Dendritic cell treated with granulocyte-macrophage colony-stimulating factor and Interleukin-4, amounts not matched to agents 40 ng/mL and 50 ng/mL, for 4 days (primary cell): ENCODE measurements at regions of chr20 and their contacts with region 1.

Region 1: DNA sequence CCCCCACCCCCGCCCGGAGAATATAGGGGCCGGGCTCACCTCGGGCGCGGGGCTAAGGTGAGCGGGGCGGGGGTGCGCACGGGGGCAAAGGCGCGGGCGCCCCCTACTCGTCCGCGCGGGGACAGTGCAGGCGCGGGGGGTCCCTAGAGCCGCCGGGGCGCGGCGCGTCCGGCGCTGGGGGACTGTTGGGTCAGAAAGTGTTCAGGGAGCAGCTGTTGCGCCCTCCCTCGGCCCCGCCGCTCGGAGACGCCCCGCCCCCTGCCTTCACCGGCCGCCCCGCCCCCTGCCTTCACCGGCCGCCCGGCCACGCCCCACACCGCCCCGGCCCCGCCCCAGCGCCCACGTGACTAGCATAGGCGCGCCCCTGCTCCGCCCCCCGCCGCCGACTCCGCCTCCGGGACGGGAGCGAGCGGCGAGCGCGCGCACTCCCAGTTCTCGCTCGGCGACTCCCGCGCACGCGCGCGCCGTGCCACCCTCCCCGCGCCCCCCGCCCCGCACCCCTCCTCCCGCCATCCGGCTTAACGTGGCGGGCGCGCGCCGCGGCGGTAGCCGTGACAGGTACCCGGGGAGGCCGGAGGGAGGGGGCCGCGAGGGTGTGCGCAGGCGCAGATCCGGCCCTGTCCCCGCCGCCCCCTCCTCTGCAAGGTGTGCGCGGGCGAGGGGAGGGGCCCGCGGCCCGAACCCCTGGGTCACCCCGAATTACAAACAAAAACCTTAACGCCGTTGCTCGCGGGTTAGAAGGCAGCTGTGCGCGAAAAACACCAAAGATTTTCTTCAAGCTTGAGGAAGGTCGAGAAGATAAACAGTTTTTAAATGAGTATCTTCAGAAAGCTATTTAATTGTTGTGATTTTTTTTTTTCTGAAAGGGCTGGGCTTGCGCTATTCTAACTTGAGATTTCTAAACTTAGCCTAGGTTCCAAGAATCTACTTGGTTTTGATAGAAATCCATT is 704 bp upstream of the ZNF217 start:
- H3K4me3 Mint-ChIP-seq: peak overlapping the region; percentile 88
- H3K27ac Mint-ChIP-seq: peak overlapping the region; percentile 95
- H3K4me1 Mint-ChIP-seq: peaks cover 39% of the 10 kb centered on the region
- H3K27me3 Mint-ChIP-seq: no peaks in the 10 kb centered on the region

Region 2: GRCh38 chr20:53643031-53643832 is 48.9 kb after region 1 on chr20:
- intact Hi-C with region 1: loop called (anchors 5 kb)
- H3K4me3 Mint-ChIP-seq: peak overlapping the region; percentile 62
- H3K27ac Mint-ChIP-seq: peak overlapping the region; percentile 91
- H3K4me1 Mint-ChIP-seq: peaks cover 49% of the 10 kb centered on the region
- H3K27me3 Mint-ChIP-seq: no peaks in the 10 kb centered on the region

Region 3: DNA sequence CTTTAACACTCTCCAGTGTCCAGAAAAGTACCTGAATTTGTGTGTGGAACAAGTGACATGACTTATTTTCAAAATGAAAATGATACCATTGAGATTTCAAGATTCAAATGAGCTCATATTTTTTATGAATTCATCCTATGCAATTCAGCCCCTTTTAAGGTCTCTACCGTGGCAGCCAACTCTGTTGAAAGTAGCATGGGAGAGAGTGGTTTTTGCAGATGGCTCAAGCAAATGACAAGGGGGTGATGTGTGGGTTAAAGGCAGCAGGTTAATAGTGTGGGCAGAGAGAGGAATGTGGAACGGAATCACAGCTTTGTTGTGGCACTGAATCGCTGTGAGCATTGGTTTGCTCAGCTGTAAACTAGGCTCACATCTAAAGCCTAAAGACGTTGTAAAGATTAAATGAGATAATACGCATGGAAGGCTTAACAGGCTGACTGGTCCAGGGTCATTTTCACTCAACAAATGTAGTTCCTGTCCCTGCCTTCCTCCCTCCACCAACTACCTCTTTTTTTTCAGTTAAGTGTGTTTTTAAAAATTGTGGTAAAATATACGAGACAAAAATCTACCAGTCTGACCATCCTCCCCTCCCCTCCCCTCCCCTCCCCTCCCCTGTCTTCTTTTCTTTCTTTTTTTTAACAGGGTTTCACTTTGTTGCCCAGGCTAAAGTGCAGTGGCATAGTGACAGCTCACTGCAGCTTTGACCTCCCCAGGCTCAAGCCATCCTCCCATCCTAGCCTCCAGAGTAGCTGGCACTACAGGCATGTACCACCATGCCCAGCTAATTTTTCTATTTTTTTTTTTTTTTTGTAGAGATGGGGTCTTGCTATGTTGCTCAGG is 114.0 kb after region 1 on chr20:
- intact Hi-C with region 1: loop called (anchors 5 kb)
- H3K4me3 Mint-ChIP-seq: peak overlapping the region; percentile 61
- H3K27ac Mint-ChIP-seq: peak overlapping the region; percentile 98
- H3K4me1 Mint-ChIP-seq: peaks cover 50% of the 10 kb centered on the region
- H3K27me3 Mint-ChIP-seq: no peaks in the 10 kb centered on the region